CD4-positive, alpha-beta memory T cell (primary cell): ENCODE measurements at regions of chr18 and their contacts with region 1.

Region 1: GRCh38 chr18:68714609-68715496 is at the start of gene TMX3:
- DNase-seq: peak; percentile 89 to 92 (median 91)
- H3K4me3 ChIP-seq: peak within 1 kb of the TSS; percentile 74 to 77
- H3K4me3 Mint-ChIP-seq: peak within 1 kb of the TSS; percentile 95 to 100 (median 100)
- H3K27ac ChIP-seq: peak within 1 kb of the TSS; percentile 73
- H3K27ac Mint-ChIP-seq: peak within 1 kb of the TSS; percentile 79 to 99 (median 97)
- H3K4me1 ChIP-seq: peaks cover 37% of the 10 kb centered on the region
- H3K4me1 Mint-ChIP-seq: peaks cover 33 to 48% (median 39%) of the 10 kb centered on the region in 4 donors
- H3K27me3 ChIP-seq: no peaks in the 10 kb centered on the region
- H3K27me3 Mint-ChIP-seq: no peaks in the 10 kb centered on the region
- total RNA-seq, gene TMX3: 67.1 to 73.6 TPM

Region 2: GRCh38 chr18:67515945-67516538 is 1198.8 kb before region 1 on chr18:
- CTCF ChIA-PET with region 1: no interaction called
- POLR2A ChIA-PET with region 1: no interaction called
- intact Hi-C with region 1: loop called (anchors 1 kb)
- DNase-seq: peak; percentile 36 to 62 (median 44)
- H3K4me3 ChIP-seq: peak overlapping the region; percentile 58 to 59
- H3K4me3 Mint-ChIP-seq: peak overlapping the region; percentile 87 to 94 (median 92)
- H3K27ac ChIP-seq: peak overlapping the region; percentile 36
- H3K27ac Mint-ChIP-seq: peak overlapping the region in 6 of 7 donors; percentile 1 to 90 (median 86)
- H3K4me1 ChIP-seq: peaks cover 16% of the 10 kb centered on the region
- H3K4me1 Mint-ChIP-seq: peaks cover 14 to 30% (median 22%) of the 10 kb centered on the region in 4 donors
- H3K27me3 ChIP-seq: no peaks in the 10 kb centered on the region
- H3K27me3 Mint-ChIP-seq: no peaks in the 10 kb centered on the region

Region 3: GRCh38 chr18:68555879-68556301 is 159.0 kb before region 1 on chr18:
- CTCF ChIA-PET with region 1: no interaction called
- POLR2A ChIA-PET with region 1: no interaction called
- intact Hi-C with region 1: no loop called
- DNase-seq: no peak
- H3K4me3 ChIP-seq: no peak overlapping the region
- H3K4me3 Mint-ChIP-seq: no peak overlapping the region
- H3K27ac ChIP-seq: no peak overlapping the region
- H3K27ac Mint-ChIP-seq: no peak overlapping the region
- H3K4me1 ChIP-seq: no peaks in the 10 kb centered on the region
- H3K4me1 Mint-ChIP-seq: no peaks in the 10 kb centered on the region
- H3K27me3 ChIP-seq: no peaks in the 10 kb centered on the region
- H3K27me3 Mint-ChIP-seq: peaks cover 1 to 3% of the 10 kb centered on the region in 2 donors

Region 4: GRCh38 chr18:69916412-69916811 is 1201.6 kb after region 1 on chr18:
- CTCF ChIA-PET with region 1: no interaction called
- POLR2A ChIA-PET with region 1: no interaction called
- intact Hi-C with region 1: loop called (anchors 10 kb)
- DNase-seq: no peak
- H3K4me3 ChIP-seq: no peak overlapping the region
- H3K4me3 Mint-ChIP-seq: peak overlapping the region in 2 of 8 donors; percentile 9 to 42
- H3K27ac ChIP-seq: no peak overlapping the region
- H3K27ac Mint-ChIP-seq: peak overlapping the region in 6 of 7 donors; percentile 16 to 69 (median 46)
- H3K4me1 ChIP-seq: peaks cover 63% of the 10 kb centered on the region
- H3K4me1 Mint-ChIP-seq: peaks cover 55 to 91% (median 73%) of the 10 kb centered on the region in 4 donors
- H3K27me3 ChIP-seq: no peaks in the 10 kb centered on the region
- H3K27me3 Mint-ChIP-seq: no peaks in the 10 kb centered on the region

Region 5: DNA sequence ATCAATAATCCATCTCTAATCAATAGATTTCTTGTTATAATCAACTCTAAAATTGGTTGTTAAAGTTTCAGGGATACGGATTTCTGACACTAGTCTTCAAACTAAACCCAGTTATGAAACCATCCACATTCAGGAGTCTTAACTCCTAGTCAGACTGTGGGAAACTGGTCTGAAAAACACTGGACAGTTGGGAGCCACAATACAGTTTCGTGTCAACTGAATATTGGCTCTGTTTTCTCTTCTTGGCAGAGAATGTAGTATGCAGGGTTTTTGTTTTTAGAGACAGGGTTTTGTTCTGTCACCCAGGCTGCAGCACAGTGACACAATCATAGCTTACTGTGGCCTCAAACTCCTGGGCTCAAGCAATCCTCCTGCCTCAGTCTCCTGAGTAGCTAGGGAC is 1367.6 kb after region 1 on chr18:
- CTCF ChIA-PET with region 1: interaction called, 3 read pairs
- POLR2A ChIA-PET with region 1: no interaction called
- intact Hi-C with region 1: loop called (anchors 10 kb)
- DNase-seq: no peak
- H3K4me3 ChIP-seq: no peak overlapping the region
- H3K4me3 Mint-ChIP-seq: no peak overlapping the region
- H3K27ac ChIP-seq: no peak overlapping the region
- H3K27ac Mint-ChIP-seq: no peak overlapping the region
- H3K4me1 ChIP-seq: no peaks in the 10 kb centered on the region
- H3K4me1 Mint-ChIP-seq: peaks cover 0 to 1% (median 0%) of the 10 kb centered on the region in 4 donors
- H3K27me3 ChIP-seq: no peaks in the 10 kb centered on the region
- H3K27me3 Mint-ChIP-seq: no peaks in the 10 kb centered on the region

Region 6: GRCh38 chr18:70205421-70206397 is 1490.9 kb after region 1 on chr18 and contains the start of gene RTTN:
- CTCF ChIA-PET with region 1: interaction called, 4 read pairs
- POLR2A ChIA-PET with region 1: interaction called, 7 read pairs
- intact Hi-C with region 1: loop called (anchors 1 kb)
- DNase-seq: peak; percentile 88 to 95 (median 92)
- H3K4me3 ChIP-seq: peak within 1 kb of the TSS; percentile 51 to 92
- H3K4me3 Mint-ChIP-seq: peak within 1 kb of the TSS; percentile 90 to 98 (median 96)
- H3K27ac ChIP-seq: peak within 1 kb of the TSS; percentile 76
- H3K27ac Mint-ChIP-seq: peak within 1 kb of the TSS; percentile 96 to 100 (median 98)
- H3K4me1 ChIP-seq: peaks cover 19% of the 10 kb centered on the region
- H3K4me1 Mint-ChIP-seq: peaks cover 15 to 41% (median 31%) of the 10 kb centered on the region in 4 donors
- H3K27me3 ChIP-seq: no peaks in the 10 kb centered on the region
- H3K27me3 Mint-ChIP-seq: no peaks in the 10 kb centered on the region
- total RNA-seq, gene RTTN: 25.3 to 27.1 TPM